OCI-LY7 (cell line): ENCODE measurements at regions of chr21 and their contacts with region 1.

Region 1: GRCh38 chr21:14762734-14763694 is 216.9 kb upstream of the SAMSN1 start:
- DNase-seq: peak; percentile 88
- H3K4me3 ChIP-seq: peak overlapping the region; percentile 52
- H3K27ac ChIP-seq: peak overlapping the region; percentile 74
- H3K4me1 ChIP-seq: peaks cover 29% of the 10 kb centered on the region
- CTCF ChIP-seq: no peak

Region 2: GRCh38 chr21:14382835-14383594 is 380.0 kb before region 1 on chr21 and contains the start of gene HSPA13:
- CTCF ChIA-PET with region 1: no interaction called
- POLR2A ChIA-PET with region 1: interaction called, 17 read pairs
- intact Hi-C with region 1: no loop called
- DNase-seq: peak; percentile 99
- H3K4me3 ChIP-seq: peak within 1 kb of the TSS; percentile 88
- H3K27ac ChIP-seq: peak within 1 kb of the TSS; percentile 51
- H3K4me1 ChIP-seq: peaks cover 29% of the 10 kb centered on the region
- CTCF ChIP-seq: no peak
- total RNA-seq, gene HSPA13: 14.6 and 17.8 TPM in 2 replicates

Region 3: GRCh38 chr21:14448784-14449183 is 314.2 kb before region 1 on chr21:
- CTCF ChIA-PET with region 1: no interaction called
- POLR2A ChIA-PET with region 1: no interaction called
- intact Hi-C with region 1: loop called (anchors 10 kb)
- DNase-seq: no peak
- H3K4me3 ChIP-seq: no peak overlapping the region
- H3K27ac ChIP-seq: no peak overlapping the region
- H3K4me1 ChIP-seq: no peaks in the 10 kb centered on the region
- CTCF ChIP-seq: no peak

Region 4: GRCh38 chr21:14686466-14687267 is 76.3 kb before region 1 on chr21:
- CTCF ChIA-PET with region 1: no interaction called
- POLR2A ChIA-PET with region 1: interaction called, 6 read pairs
- intact Hi-C with region 1: loop called (anchors 5 kb)
- DNase-seq: peak; percentile 42
- H3K4me3 ChIP-seq: peak overlapping the region; percentile 41
- H3K27ac ChIP-seq: peak overlapping the region; percentile 71
- H3K4me1 ChIP-seq: peaks cover 83% of the 10 kb centered on the region
- CTCF ChIP-seq: no peak

Region 5: GRCh38 chr21:14814991-14815390 is 52.0 kb after region 1 on chr21:
- CTCF ChIA-PET with region 1: no interaction called
- POLR2A ChIA-PET with region 1: no interaction called
- intact Hi-C with region 1: no loop called
- DNase-seq: no peak
- H3K4me3 ChIP-seq: no peak overlapping the region
- H3K27ac ChIP-seq: no peak overlapping the region
- H3K4me1 ChIP-seq: no peaks in the 10 kb centered on the region
- CTCF ChIP-seq: no peak

Region 6: DNA sequence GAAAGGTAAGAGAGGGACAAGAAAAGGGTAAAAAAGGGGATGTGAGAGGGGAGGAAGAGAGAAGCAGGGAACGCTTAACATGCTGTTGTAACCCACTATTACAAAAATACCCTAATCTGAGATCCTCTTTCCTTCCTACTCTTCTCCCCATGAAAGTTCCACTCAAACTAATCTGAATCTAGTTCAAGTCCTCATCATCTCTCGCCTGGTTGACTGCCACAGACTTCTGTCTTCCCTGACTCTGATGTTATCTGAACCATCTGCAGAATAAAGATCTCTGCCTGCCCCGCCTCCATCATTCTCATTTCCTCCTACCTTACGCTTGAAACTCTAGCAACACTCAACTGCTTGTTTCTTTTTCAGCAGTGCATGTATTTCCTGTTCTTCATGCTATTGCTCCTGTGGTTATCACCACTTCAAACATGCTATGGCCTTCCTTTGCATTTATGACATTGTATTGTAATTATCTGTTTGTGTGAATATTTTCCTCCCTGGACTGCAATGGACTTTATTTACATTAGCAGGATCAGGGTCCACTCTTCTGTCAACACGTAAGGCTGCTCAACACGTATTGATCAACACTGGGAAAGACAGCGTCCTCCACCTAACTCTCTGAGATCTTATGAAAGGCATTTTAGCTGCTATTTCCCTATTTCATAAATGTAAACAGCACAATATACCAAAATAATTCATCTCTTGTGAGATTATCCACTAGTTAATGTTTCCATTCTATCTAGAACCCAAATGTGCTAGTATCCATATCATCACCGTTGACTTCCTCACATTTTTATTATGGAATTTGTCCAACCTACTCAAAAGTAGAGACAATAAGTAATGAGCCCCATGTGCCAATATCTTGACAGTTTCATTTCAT is 751.3 kb after region 1 on chr21:
- CTCF ChIA-PET with region 1: no interaction called
- POLR2A ChIA-PET with region 1: no interaction called
- intact Hi-C with region 1: loop called (anchors 5 kb)
- DNase-seq: peak; percentile 84
- H3K4me3 ChIP-seq: peak overlapping the region; percentile 43
- H3K27ac ChIP-seq: peak overlapping the region; percentile 86
- H3K4me1 ChIP-seq: peaks cover 27% of the 10 kb centered on the region
- CTCF ChIP-seq: no peak

Region 7: DNA sequence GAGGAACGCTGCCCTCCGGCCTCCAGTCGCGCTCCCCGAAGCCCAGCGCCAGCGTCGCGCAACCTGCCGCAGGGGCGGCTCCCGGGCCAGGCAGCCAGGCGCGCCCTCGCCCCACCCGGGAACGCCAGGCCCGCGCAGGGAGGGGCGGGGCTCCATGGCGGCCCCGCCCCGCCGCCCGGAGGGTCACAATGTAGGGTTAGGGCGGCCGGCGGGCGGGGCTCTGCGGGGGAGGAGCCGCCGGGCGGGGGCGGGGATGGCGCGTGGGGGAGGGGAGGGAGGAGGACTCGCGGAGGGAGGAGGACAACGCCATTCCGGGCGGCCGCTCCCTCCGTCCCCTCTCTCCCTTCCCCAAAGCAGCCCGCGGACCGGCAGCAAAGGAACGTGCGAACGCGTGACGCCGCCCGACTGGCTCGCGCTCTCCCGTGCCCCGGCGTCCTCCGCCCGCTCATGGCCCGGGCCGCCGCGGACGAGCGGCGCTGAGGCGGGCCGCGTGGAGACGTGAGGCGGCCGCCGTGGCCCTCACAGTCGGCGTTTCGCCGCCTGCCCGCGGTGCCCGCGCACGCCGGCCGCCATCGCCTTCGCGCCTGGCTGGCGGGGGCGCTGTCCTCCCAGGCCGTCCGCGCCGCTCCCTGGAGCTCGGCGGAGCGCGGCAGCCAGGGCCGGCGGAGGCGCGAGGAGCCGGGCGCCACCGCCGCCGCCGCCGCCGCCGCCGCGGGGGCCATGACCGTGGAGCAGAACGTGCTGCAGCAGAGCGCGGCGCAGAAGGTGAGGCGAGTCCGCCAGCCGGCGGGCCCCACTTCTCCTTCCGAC is 966.9 kb after region 1 on chr21 and contains the start of gene USP25:
- CTCF ChIA-PET with region 1: no interaction called
- POLR2A ChIA-PET with region 1: no interaction called
- intact Hi-C with region 1: loop called (anchors 10 kb)
- DNase-seq: peak; percentile 79
- H3K4me3 ChIP-seq: peak within 1 kb of the TSS; percentile 86
- H3K27ac ChIP-seq: peak within 1 kb of the TSS; percentile 49
- H3K4me1 ChIP-seq: peaks cover 14% of the 10 kb centered on the region
- CTCF ChIP-seq: no peak
- total RNA-seq, gene USP25: 25.1 and 27.6 TPM in 2 replicates